ENCODE measurements at regions of chr4 and their contacts with region 1.

Region 1: DNA sequence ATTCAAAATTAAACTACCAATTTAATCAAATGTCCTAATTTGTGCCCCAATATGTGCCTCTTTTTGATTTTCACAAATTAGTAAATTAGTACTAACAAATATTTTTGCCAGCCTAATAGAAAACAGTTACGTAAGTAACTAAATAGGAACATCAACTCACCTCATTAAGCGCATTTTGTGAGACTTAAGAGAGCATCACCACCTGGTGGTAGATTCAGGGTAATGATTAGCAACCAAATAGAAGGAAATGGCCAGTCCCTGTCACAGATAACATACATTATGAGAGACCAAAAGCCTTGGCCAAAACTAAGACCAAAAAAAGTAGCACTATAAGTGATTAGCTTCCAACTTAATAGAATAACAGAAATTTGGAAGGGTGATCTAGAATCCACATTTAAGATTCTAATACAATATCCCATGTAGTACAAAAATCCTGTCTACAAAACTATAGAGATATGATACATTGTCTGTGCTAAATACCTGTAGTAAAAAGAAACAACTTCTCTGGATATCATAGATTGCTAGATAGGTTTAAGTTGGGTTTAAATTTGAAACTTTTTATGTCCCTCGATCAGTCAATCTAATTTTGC is 46.7 kb downstream of the C4orf46 start:
- DNase-seq: no peak
- H3K4me3 ChIP-seq: no peak overlapping the region
- H3K27ac ChIP-seq: no peak overlapping the region
- H3K4me1 ChIP-seq: no peaks in the 10 kb centered on the region
- H3K27me3 ChIP-seq: no peaks in the 10 kb centered on the region
- CTCF ChIP-seq: peak; percentile 59 to 68 (median 61)
- EP300 ChIP-seq: no peak
- POLR2A ChIP-seq: no peak

Region 2: DNA sequence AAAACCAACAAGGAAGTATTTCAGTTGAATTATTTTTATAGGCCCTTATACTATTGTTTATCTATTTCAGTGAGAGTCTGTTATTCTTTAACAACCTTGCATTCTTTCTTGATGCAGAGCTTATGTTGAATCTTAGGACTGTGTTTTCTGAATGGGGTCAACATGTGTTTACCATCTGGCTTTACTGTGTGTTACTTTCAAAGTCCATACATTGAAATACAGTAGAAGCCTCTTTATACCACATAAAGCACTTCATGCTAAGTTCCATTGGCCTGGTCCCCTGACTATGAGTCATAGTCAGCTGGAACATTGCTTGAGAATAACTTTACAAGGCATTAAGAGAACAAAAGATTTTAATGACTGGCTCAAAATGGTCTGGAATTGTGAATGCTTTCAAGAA is 604.8 kb before region 1 on chr4:
- in situ Hi-C with region 1: loop called in 1 of 4 experiments (anchors 25 kb)
- intact Hi-C with region 1: no loop called
- DNase-seq: peak; percentile 18
- H3K4me3 ChIP-seq: no peak overlapping the region
- H3K27ac ChIP-seq: peak overlapping the region; percentile 36 to 66 (median 64)
- H3K4me1 ChIP-seq: peaks cover 4 to 21% (median 13%) of the 10 kb centered on the region in 4 donors
- H3K27me3 ChIP-seq: no peaks in the 10 kb centered on the region
- CTCF ChIP-seq: no peak
- EP300 ChIP-seq: peak; percentile 26
- POLR2A ChIP-seq: no peak

Region 3: GRCh38 chr4:158259955-158260575 is 364.9 kb before region 1 on chr4:
- in situ Hi-C with region 1: loop called in 3 of 4 experiments (anchors 10 to 25 kb)
- intact Hi-C with region 1: loop called (anchors 10 kb)
- DNase-seq: no peak
- H3K4me3 ChIP-seq: no peak overlapping the region
- H3K27ac ChIP-seq: no peak overlapping the region
- H3K4me1 ChIP-seq: no peaks in the 10 kb centered on the region
- H3K27me3 ChIP-seq: no peaks in the 10 kb centered on the region
- CTCF ChIP-seq: peak in 3 of 5 experiments; percentile 4 to 19 (median 12)
- EP300 ChIP-seq: no peak
- POLR2A ChIP-seq: no peak